Posterior cingulate gyrus (tissue), 11 donors: ENCODE measurements at regions of chr1 and their contacts with region 1.

Region 1: GRCh38 chr1:192477630-192478029 is 97.9 kb upstream of the RGS1 start:
- DNase-seq: no peak

Region 2: DNA sequence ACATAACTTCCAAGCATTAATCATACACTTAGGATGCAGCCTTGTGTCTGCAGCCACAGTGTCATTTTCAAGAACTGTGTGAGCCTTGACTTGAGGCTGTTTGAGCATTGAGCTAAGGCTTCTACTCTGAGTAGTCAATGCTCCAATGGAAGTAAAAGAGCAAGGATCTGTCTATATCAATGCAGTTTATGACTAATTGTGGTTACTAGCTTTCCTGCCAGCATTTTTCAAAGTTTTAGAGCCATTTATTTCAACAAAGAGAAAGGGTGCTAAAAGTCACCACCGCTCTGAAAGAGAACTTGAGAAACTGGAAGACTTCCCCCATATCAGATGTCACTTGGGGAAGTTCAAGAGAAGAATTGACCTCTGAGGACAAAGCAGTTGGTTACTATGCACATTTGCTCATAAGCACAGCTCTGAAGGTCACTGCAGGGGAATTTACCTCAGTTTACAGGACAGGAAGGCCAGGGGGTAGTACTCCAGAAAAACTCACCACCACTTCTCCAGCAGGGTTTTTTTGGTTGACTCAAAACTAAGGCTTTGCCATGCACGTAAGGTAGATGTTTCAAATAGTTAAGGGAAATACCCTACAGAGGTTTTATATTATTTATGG is 73.4 kb after region 1 on chr1:
- intact Hi-C with region 1: no loop called
- DNase-seq: no peak

Region 3: GRCh38 chr1:192609110-192610079 is 131.8 kb after region 1 on chr1:
- intact Hi-C with region 1: loop called (anchors 1 kb)
- DNase-seq: peak in 9 of 10 donors; percentile 4 to 86 (median 33)

Region 4: GRCh38 chr1:192808518-192809306 is 331.1 kb after region 1 on chr1 and contains the start of gene RGS2:
- intact Hi-C with region 1: loop called (anchors 5 kb)
- DNase-seq: peak; percentile 89 to 99 (median 95)